ENCODE measurements at regions of chr3 and their contacts with region 1.

Region 1: DNA sequence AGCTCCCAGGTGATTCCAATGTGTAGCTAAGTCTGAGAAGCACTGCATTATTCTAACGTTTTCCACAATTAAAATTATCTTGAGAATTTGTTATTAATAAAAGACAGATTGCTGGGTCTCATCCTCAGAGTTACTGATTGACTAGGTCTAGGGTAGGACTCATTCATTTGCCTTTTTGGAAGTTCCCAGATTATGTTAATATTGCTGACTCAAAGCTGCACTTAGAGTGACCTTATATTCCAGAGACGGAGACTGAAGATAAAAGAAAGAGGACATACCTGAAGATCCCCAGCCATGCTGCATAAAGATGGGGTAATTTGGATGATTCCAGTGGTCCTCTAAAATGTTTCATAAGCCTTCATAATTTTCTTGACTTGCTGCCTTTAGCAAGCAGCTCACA is 81.8 kb downstream of the PLSCR2 start:
- DNase-seq: no peak
- ATAC-seq: no peak
- H3K4me3 ChIP-seq: no peak overlapping the region
- H3K27ac ChIP-seq: no peak overlapping the region
- H3K4me1 ChIP-seq: peaks cover 0 to 19% (median 8%) of the 10 kb centered on the region in 12 donors
- H3K27me3 ChIP-seq: no peaks in the 10 kb centered on the region
- CTCF ChIP-seq: no peak
- POLR2A ChIP-seq: no peak

Region 2: GRCh38 chr3:146342989-146343388 is 44.6 kb before region 1 on chr3:
- intact Hi-C with region 1: loop called in 2 of 10 experiments (anchors 2 to 5 kb)
- DNase-seq: no peak
- ATAC-seq: no peak
- H3K4me3 ChIP-seq: no peak overlapping the region
- H3K27ac ChIP-seq: no peak overlapping the region
- H3K4me1 ChIP-seq: no peaks in the 10 kb centered on the region
- H3K27me3 ChIP-seq: no peaks in the 10 kb centered on the region
- CTCF ChIP-seq: no peak
- POLR2A ChIP-seq: no peak

Region 3: DNA sequence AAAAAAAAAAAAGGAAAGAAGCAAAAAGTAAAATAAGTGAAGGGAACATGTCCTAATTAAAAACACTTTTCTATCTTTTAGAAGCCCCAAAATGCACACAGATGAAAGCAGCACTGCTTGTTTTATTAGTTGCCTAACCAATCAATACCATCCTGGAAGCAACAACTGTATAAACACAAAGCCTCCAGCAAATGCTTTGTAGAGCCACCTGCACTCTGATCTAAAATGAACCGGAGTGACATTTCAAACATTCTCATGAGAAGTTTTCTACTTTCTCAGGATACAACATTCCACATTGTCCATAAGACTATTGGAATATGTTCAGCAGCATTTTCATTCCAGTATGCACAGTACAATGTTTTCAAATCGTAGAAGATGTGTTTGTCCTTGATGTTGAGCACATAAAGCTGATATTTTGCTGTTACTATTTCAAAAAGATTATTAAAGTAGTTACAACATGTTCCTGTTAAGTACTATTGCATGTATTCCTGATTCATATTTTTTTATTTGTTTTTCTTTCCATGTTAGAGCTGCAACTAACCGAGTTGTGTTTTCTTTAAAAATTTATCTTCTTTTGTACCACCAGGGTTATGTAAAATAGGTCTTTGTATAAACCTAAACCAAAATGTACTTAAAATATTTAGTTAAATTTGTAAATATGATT is 267.9 kb after region 1 on chr3:
- intact Hi-C with region 1: no loop called
- DNase-seq: no peak
- ATAC-seq: no peak
- H3K4me3 ChIP-seq: no peak overlapping the region
- H3K27ac ChIP-seq: no peak overlapping the region
- H3K4me1 ChIP-seq: no peaks in the 10 kb centered on the region
- H3K27me3 ChIP-seq: no peaks in the 10 kb centered on the region
- CTCF ChIP-seq: no peak
- POLR2A ChIP-seq: no peak

Measured in heart left ventricle (tissue), 16 donors.